ENCODE measurements at regions of chr2 and their contacts with region 1.

Region 1: GRCh38 chr2:151459358-151459757 is 49.7 kb downstream of the RIF1 start:
- DNase-seq: no peak
- H3K4me3 ChIP-seq: no peak overlapping the region
- H3K4me1 ChIP-seq: no peaks in the 10 kb centered on the region
- H3K27me3 ChIP-seq: no peaks in the 10 kb centered on the region

Region 2: DNA sequence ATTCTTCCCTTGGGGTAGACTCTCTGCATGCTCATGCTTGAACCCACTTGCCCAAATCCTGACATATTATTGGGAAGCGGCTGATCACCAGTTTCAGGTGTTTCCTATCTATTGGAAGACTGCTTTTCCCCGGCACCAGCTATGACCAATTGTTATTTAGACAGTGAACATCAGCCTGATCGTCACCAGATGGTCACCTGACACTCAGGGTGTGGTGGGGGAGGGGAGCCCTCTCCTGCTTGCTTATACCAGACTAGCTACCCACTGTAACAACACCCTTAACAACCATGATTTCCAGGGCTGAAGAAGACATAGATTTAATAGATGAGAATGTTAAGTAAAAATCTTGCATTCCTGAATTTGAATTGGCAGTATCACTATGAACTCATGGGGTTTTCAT is 242.0 kb before region 1 on chr2:
- in situ Hi-C with region 1: no loop called
- DNase-seq: peak in 1 of 2 experiments; percentile 11
- H3K4me3 ChIP-seq: no peak overlapping the region
- H3K4me1 ChIP-seq: no peaks in the 10 kb centered on the region
- H3K27me3 ChIP-seq: no peaks in the 10 kb centered on the region

Region 3: GRCh38 chr2:151575338-151575737 is 116.0 kb after region 1 on chr2:
- in situ Hi-C with region 1: no loop called
- DNase-seq: no peak
- H3K4me3 ChIP-seq: no peak overlapping the region
- H3K4me1 ChIP-seq: no peaks in the 10 kb centered on the region
- H3K27me3 ChIP-seq: no peaks in the 10 kb centered on the region

Region 4: DNA sequence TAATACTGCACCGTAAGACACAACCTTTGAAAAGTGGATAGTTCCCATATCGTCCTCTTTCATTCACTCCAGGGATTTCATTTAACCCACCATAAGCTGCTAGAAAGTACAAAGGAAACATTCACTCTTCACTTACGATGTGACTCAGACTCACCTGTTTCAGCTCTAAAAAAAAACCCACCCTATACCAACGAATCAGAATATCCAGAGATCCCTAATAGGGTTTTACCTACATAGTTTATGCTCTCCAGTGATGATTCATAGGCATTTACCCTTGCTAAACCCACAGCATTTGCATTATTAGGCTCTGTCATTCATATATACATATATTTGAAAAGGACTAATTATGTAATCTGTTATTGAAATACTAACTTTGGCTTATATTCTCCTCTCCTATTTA is 1197.7 kb after region 1 on chr2:
- in situ Hi-C with region 1: loop called (anchors 25 kb)
- DNase-seq: no peak
- H3K4me3 ChIP-seq: no peak overlapping the region
- H3K4me1 ChIP-seq: peaks cover 4% of the 10 kb centered on the region; the same call in 1 of the 2 replicates
- H3K27me3 ChIP-seq: no peaks in the 10 kb centered on the region